ENCODE measurements at regions of chr5 and their contacts with region 1.

Region 1: GRCh38 chr5:67032921-67033664 is 163.5 kb downstream of the CD180 start:
- DNase-seq: no peak
- H3K4me3 Mint-ChIP-seq: no peak overlapping the region
- H3K27ac Mint-ChIP-seq: no peak overlapping the region
- H3K4me1 Mint-ChIP-seq: peaks cover 67% of the 10 kb centered on the region
- H3K27me3 Mint-ChIP-seq: no peaks in the 10 kb centered on the region

Region 2: DNA sequence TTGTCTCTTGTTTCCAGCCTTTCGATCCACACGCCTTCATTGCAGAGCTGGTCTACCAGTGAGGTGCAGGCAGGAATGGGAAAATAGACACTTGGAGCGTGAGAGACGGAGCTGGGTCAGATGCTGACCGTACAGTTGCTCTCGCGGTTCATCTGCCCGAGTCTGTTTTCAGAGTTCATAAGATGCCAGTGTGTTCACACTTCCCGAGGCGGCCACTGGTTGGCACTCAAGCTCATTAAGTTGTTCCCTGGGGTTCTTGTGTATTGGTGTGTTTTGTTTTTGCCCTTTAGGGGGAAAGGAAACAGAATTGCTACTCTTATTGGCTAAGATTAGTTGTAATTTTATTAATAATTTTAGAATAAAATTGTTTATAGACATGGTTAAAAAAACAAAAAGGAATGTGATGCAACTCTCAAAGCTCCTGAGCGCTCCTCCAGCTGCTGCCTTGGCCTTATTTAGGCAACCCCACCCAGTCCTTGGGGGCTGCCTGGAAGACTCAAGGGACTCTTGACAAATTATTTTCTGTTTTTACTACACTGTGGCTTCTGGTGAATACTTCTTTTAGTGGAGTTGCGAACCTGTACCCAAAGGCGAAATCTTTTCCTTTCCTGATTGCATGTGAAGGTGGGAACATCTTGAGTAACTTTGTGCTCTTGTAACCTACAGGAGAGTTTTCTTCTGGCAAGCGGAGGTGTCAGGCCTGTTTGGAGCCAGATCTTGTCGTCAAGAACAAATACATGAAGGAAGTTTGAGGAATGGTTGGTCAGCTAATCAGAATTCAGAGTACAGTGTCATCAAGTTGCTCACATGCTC is 290.8 kb before region 1 on chr5:
- CTCF ChIA-PET with region 1: no interaction called
- POLR2A ChIA-PET with region 1: no interaction called
- intact Hi-C with region 1: no loop called
- DNase-seq: no peak
- H3K4me3 Mint-ChIP-seq: no peak overlapping the region
- H3K27ac Mint-ChIP-seq: no peak overlapping the region
- H3K4me1 Mint-ChIP-seq: no peaks in the 10 kb centered on the region
- H3K27me3 Mint-ChIP-seq: peaks cover 26% of the 10 kb centered on the region

Region 3: GRCh38 chr5:66923457-66923856 is 109.6 kb before region 1 on chr5:
- CTCF ChIA-PET with region 1: no interaction called
- POLR2A ChIA-PET with region 1: no interaction called
- intact Hi-C with region 1: no loop called
- DNase-seq: no peak
- H3K4me3 Mint-ChIP-seq: no peak overlapping the region
- H3K27ac Mint-ChIP-seq: no peak overlapping the region
- H3K4me1 Mint-ChIP-seq: no peaks in the 10 kb centered on the region
- H3K27me3 Mint-ChIP-seq: peaks cover 12% of the 10 kb centered on the region

Region 4: DNA sequence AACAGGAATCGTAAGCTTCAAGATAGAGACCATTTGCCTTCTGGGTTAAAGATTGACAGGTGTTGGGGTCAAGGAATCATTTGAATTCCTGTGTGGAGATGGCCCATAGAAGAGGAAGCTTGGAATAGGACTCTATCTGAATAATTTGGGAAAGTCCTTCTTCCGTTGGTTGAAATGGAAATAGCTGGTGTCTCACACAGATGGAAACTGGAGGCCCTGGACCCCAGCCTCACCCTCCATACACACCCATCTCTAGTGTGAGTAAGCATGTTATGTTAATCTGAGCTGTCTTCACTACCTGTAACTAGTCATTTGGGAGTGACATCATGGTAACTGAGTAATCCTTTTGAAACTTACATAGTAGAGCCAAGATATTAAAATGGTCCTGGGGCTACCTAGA is 20.9 kb before region 1 on chr5:
- CTCF ChIA-PET with region 1: no interaction called
- POLR2A ChIA-PET with region 1: interaction called, 4 read pairs
- intact Hi-C with region 1: loop called (anchors 1 kb)
- DNase-seq: peak; percentile 58
- H3K4me3 Mint-ChIP-seq: no peak overlapping the region
- H3K27ac Mint-ChIP-seq: peak overlapping the region; percentile 72
- H3K4me1 Mint-ChIP-seq: peaks cover 94% of the 10 kb centered on the region
- H3K27me3 Mint-ChIP-seq: no peaks in the 10 kb centered on the region

Region 5: DNA sequence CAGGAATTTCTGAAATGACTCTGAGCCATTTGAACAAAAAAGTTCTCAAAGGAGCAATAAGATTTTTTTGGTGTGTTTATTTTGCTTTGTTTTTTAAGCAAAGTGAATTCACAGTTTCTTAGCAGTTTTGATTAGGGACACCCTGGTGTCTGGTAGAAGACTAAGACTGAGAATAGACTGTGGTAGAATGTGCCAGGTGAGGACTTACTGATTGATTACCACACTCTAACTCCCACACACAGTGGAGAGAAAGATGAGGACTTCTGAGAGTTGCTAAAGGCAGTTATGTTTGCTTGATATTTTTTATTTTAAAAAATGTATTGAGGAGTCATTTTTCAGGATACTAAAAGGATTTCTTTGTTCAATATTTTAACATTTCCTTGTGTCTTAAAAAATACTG is 11.6 kb before region 1 on chr5:
- CTCF ChIA-PET with region 1: no interaction called
- POLR2A ChIA-PET with region 1: interaction called, 4 read pairs
- intact Hi-C with region 1: loop called (anchors 1 kb)
- DNase-seq: no peak
- H3K4me3 Mint-ChIP-seq: no peak overlapping the region
- H3K27ac Mint-ChIP-seq: no peak overlapping the region
- H3K4me1 Mint-ChIP-seq: peaks cover 30% of the 10 kb centered on the region
- H3K27me3 Mint-ChIP-seq: no peaks in the 10 kb centered on the region

Region 6: DNA sequence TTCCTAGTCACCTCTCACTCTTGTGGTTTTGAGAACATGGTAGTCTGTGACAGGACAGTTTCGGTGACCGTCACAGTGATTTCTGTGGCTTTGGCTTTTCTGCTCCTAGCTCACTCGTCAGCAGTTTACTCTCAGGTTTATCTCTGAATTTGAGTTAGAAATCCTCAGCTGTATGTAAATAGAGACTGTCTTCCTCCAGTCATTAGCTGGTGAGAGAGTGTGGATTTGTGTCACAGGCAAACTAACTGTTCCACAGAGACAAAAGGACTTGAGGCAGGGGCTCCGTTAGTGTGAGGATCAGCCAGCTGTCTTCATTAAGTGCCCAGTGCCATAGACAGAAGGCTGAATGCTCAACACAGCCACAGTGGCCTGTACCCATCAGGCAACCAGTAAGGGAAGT is 32.1 kb after region 1 on chr5:
- CTCF ChIA-PET with region 1: interaction called, 3 read pairs
- POLR2A ChIA-PET with region 1: no interaction called
- intact Hi-C with region 1: loop called (anchors 5 kb)
- DNase-seq: peak; percentile 71
- H3K4me3 Mint-ChIP-seq: no peak overlapping the region
- H3K27ac Mint-ChIP-seq: peak overlapping the region; percentile 74
- H3K4me1 Mint-ChIP-seq: peaks cover 26% of the 10 kb centered on the region
- H3K27me3 Mint-ChIP-seq: no peaks in the 10 kb centered on the region

Region 7: GRCh38 chr5:67089200-67089725 is 56.2 kb after region 1 on chr5:
- CTCF ChIA-PET with region 1: no interaction called
- POLR2A ChIA-PET with region 1: no interaction called
- intact Hi-C with region 1: no loop called
- DNase-seq: no peak
- H3K4me3 Mint-ChIP-seq: no peak overlapping the region
- H3K27ac Mint-ChIP-seq: no peak overlapping the region
- H3K4me1 Mint-ChIP-seq: peaks cover 7% of the 10 kb centered on the region
- H3K27me3 Mint-ChIP-seq: no peaks in the 10 kb centered on the region

Region 8: DNA sequence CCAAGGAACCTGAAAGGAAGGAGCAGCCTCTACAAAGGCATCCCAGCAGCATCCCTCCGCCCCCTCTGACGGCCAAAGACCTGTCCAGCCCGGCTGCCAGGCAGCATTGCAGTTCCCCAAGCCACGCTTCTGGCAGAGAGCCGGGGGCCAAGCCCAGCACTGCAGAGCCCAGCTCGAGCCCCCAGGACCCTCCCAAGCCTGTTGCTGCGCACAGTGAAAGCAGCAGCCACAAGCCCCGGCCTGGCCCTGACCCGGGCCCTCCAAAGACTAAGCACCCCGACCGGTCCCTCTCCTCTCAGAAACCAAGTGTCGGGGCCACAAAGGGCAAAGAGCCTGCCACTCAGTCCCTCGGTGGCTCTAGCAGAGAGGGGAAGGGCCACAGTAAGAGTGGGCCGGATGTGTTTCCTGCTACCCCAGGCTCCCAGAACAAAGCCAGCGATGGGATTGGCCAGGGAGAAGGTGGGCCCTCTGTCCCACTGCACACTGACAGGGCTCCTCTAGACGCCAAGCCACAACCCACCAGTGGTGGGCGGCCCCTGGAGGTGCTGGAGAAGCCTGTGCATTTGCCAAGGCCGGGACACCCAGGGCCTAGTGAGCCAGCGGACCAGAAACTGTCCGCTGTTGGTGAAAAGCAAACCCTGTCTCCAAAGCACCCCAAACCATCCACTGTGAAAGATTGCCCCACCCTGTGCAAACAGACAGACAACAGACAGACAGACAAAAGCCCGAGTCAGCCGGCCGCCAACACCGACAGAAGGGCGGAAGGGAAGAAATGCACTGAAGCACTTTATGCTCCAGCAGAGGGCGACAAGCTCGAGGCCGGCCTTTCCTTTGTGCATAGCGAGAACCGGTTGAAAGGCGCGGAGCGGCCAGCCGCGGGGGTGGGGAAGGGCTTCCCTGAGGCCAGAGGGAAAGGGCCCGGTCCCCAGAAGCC is 132.7 kb after region 1 on chr5:
- CTCF ChIA-PET with region 1: no interaction called
- POLR2A ChIA-PET with region 1: no interaction called
- intact Hi-C with region 1: no loop called
- DNase-seq: peak; percentile 89
- H3K4me3 Mint-ChIP-seq: peak overlapping the region; percentile 91
- H3K27ac Mint-ChIP-seq: peak overlapping the region; percentile 98
- H3K4me1 Mint-ChIP-seq: peaks cover 70% of the 10 kb centered on the region
- H3K27me3 Mint-ChIP-seq: no peaks in the 10 kb centered on the region

Measured in activated CD4-positive, alpha-beta memory T cell treated with anti-CD3 and anti-CD28 coated beads for 36 hours (primary cell).